Calu3 (cell line): ENCODE measurements at regions of chr2 and their contacts with region 1.

Region 1: GRCh38 chr2:47334356-47335136 is 68.4 kb upstream of the MSH2 start:
- DNase-seq: no peak
- H3K4me3 Mint-ChIP-seq: no peak overlapping the region
- H3K27ac Mint-ChIP-seq: no peak overlapping the region
- H3K4me1 Mint-ChIP-seq: peaks cover 15% of the 10 kb centered on the region
- H3K27me3 Mint-ChIP-seq: no peaks in the 10 kb centered on the region
- CTCF ChIP-seq: no peak

Region 2: GRCh38 chr2:47288864-47289263 is 45.7 kb before region 1 on chr2:
- CTCF ChIA-PET with region 1: no interaction called
- intact Hi-C with region 1: no loop called
- DNase-seq: no peak
- H3K4me3 Mint-ChIP-seq: no peak overlapping the region
- H3K27ac Mint-ChIP-seq: peak overlapping the region; percentile 52
- H3K4me1 Mint-ChIP-seq: peaks cover 24% of the 10 kb centered on the region
- H3K27me3 Mint-ChIP-seq: no peaks in the 10 kb centered on the region
- CTCF ChIP-seq: no peak

Region 3: DNA sequence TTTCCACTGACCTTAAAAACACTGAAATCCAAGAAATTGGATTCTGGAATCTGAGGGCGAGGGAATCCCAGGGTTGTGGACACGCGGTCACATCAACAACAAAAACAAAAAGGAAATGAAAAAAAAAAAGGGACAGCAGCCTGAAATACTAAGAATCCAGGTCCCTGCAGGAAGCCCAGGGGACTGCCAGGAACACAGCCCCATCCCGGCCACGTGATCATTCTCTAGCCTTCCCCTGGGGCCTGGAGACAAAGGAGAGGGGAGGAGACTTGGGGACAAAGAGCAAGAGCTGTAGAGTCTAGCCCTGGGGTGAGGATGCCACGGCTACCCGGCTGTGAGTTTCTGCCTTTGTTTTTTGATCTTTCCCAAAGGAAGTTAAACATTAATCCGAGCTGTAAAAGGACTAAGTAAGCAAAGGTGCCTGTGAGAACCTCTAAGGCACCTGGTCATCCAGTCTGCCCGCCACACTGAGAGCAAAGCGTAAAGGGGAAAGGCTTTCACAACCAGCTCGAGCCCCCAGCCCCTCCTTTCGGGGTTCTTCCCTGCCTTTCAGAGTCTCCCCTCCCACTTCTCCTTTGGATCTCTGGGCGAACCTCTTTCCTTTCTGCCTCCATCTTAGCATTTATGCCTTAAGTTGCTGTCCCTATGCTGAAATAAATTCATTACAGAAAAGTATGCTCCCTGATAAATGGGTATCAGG is 10.5 kb after region 1 on chr2:
- CTCF ChIA-PET with region 1: interaction called, 25 read pairs
- intact Hi-C with region 1: no loop called
- DNase-seq: peak; percentile 96
- H3K4me3 Mint-ChIP-seq: peak overlapping the region; percentile 81
- H3K27ac Mint-ChIP-seq: peak overlapping the region; percentile 84
- H3K4me1 Mint-ChIP-seq: peaks cover 58% of the 10 kb centered on the region
- H3K27me3 Mint-ChIP-seq: no peaks in the 10 kb centered on the region
- CTCF ChIP-seq: peak; percentile 15